Mammary epithelial cell (primary cell): ENCODE measurements at regions of chr9 and their contacts with region 1.

Region 1: DNA sequence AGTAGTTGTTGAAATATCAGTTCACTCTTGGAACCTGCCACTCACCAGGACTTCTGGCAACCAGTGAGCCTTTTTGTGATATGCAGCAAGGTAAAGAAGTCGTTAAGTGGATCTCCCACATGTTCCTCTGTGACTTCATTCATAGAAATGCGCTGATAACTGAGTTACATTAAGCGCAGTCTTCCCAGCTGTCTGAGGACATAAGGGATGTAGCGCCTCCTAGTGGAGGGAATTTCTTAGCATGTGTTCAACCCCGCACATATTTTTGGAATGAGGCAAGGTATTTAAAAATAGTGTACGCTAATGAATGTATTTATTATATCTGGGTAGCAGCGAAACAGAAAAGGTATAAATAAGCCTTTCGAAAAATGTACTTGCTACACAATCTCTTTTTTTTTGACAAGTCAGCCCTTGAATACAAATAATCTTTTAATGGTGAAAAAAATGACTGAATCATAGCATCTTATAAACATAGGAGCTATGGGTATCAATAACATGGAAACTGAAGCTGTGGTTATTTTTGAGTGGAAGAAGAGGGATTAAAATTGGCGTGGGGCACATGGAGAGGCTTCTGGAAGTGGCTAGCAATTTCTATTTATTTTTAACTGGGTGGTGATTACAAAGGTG is 38.0 kb downstream of the PALM2AKAP2 start:
- DNase-seq: peak; percentile 87
- H3K4me3 ChIP-seq: no peak overlapping the region
- H3K27ac ChIP-seq: peak overlapping the region; percentile 58
- H3K4me1 ChIP-seq: peaks cover 37% of the 10 kb centered on the region
- H3K27me3 ChIP-seq: no peaks in the 10 kb centered on the region
- CTCF ChIP-seq: peak; percentile 75 to 88

Region 2: DNA sequence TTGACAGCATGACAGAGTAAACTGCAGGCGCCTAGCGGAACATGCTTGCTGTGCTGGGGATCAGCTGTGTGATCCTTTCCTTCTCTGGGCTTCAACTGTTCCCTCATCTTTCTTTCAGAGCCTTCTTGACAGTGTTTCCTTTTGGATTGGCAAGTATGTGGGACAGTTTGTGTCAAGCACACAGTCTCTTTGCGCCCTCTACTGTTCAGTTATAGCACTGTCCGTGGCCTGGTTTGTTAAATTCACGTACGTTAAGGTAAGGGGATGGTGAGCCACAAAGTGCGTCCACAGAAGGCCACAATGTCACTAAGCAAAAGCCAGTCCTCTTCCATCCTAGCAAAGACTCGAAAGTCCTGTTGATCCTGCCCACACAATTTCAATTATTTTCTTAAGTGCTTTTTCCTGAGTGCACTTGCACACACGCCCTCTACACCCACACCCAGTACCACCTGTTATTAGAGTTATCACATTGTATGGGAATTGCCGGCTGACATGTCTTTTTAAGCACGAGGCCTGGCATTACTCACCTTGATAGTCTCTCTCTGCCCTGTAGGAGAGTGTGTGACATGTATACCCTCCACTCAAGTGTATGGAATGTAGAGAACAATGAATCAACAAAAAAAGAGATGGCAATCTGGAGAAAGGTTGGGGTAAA is 297.4 kb before region 1 on chr9:
- CTCF ChIA-PET with region 1: no interaction called
- dilution Hi-C with region 1: no loop called
- in situ Hi-C with region 1: no loop called
- intact Hi-C with region 1: loop called (anchors 5 kb)
- DNase-seq: peak; percentile 81
- H3K4me3 ChIP-seq: no peak overlapping the region
- H3K27ac ChIP-seq: peak overlapping the region; percentile 9
- H3K4me1 ChIP-seq: peaks cover 11% of the 10 kb centered on the region
- H3K27me3 ChIP-seq: no peaks in the 10 kb centered on the region
- CTCF ChIP-seq: peak; percentile 93 to 98

Region 3: GRCh38 chr9:109639674-109640579 is 178.0 kb before region 1 on chr9:
- CTCF ChIA-PET with region 1: no interaction called
- dilution Hi-C with region 1: no loop called
- in situ Hi-C with region 1: no loop called
- intact Hi-C with region 1: loop called (anchors 5 kb)
- DNase-seq: peak; percentile 65
- H3K4me3 ChIP-seq: peak overlapping the region; percentile 36 to 54 (median 51)
- H3K27ac ChIP-seq: no peak overlapping the region
- H3K4me1 ChIP-seq: peaks cover 14% of the 10 kb centered on the region
- H3K27me3 ChIP-seq: peaks cover 16% of the 10 kb centered on the region
- CTCF ChIP-seq: peak in 1 of 2 donors; percentile 18

Region 4: GRCh38 chr9:109733690-109734089 is 84.3 kb before region 1 on chr9:
- CTCF ChIA-PET with region 1: no interaction called
- dilution Hi-C with region 1: no loop called
- in situ Hi-C with region 1: no loop called
- intact Hi-C with region 1: loop called (anchors 2 kb)
- DNase-seq: peak; percentile 79
- H3K4me3 ChIP-seq: no peak overlapping the region
- H3K27ac ChIP-seq: no peak overlapping the region
- H3K4me1 ChIP-seq: peaks cover 25% of the 10 kb centered on the region
- H3K27me3 ChIP-seq: no peaks in the 10 kb centered on the region
- CTCF ChIP-seq: no peak

Region 5: DNA sequence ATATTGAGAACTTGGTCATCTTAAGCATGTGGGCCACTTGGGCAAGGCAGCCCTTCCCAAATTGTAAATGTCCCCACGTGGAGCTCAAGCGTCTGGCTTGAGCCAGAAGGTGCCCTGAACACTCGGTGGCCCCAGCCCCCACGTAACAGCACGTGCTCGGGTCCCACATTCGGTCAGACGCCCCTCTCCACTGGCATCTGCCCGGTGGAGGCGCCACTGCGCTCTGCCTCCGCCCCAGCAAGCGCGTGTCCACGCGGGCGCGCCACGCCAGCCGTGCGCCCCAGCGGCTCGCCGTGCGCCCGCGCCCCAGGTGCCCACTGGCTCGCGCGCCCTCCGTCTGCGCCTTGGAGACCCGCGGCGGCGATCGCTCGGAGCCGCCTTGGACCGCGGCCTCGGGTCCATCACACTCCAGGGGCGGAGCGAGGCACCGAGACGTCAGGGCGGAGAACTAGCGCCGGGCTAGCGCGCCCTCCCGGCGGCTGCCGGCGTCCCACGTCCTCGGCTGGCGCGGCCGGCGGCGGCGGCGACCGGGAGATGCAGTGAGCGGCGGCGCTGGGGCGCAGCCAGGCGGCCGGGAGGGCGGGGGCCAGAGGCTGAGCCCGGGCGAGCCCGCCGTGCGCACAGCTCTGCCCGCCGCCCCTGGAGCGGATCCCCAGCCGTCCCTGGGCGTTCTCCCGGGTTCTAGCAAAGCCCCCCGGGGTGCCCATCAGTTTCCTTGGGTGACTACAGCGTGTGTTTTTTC is 38.1 kb before region 1 on chr9 and contains the start of gene PALM2AKAP2:
- CTCF ChIA-PET with region 1: no interaction called
- dilution Hi-C with region 1: no loop called
- in situ Hi-C with region 1: no loop called
- intact Hi-C with region 1: loop called (anchors 1 kb)
- DNase-seq: peak; percentile 73
- H3K4me3 ChIP-seq: peak within 1 kb of the TSS; percentile 71 to 77 (median 72)
- H3K27ac ChIP-seq: peak within 1 kb of the TSS; percentile 52
- H3K4me1 ChIP-seq: peaks cover 29% of the 10 kb centered on the region
- H3K27me3 ChIP-seq: no peaks in the 10 kb centered on the region
- CTCF ChIP-seq: no peak
- total RNA-seq, gene PALM2AKAP2: 22.3 to 49.0 TPM

Region 6: DNA sequence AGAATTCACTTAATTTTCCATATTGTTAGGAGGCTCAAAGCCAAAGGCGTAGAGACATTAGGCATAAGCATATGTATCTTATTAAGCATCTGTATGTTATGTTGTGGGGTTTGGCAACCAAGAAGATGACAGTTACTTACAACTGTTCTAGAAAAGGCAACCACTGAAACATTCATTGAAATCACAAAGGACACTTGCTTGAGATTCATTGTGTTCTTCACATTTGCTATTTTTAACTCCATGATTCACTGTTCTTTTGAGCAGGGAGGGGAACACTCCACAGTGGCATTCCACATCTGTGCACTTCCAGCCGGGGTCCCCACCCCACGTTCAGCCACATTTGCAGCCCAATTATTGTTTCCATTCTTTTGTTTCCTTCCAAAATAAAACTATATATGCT is 69.1 kb after region 1 on chr9:
- CTCF ChIA-PET with region 1: no interaction called
- dilution Hi-C with region 1: no loop called
- in situ Hi-C with region 1: no loop called
- intact Hi-C with region 1: loop called (anchors 5 kb)
- DNase-seq: peak; percentile 40
- H3K4me3 ChIP-seq: no peak overlapping the region
- H3K27ac ChIP-seq: peak overlapping the region; percentile 31
- H3K4me1 ChIP-seq: peaks cover 44% of the 10 kb centered on the region
- H3K27me3 ChIP-seq: no peaks in the 10 kb centered on the region
- CTCF ChIP-seq: no peak